Natural killer cell (primary cell): ENCODE measurements at regions of chr15 and their contacts with region 1.

Region 1: GRCh38 chr15:43390723-43391122 is 19.8 kb downstream of the TUBGCP4 start:
- DNase-seq: no peak
- ATAC-seq: no peak
- H3K4me3 ChIP-seq: no peak overlapping the region
- H3K4me3 Mint-ChIP-seq: no peak overlapping the region
- H3K27ac ChIP-seq: no peak overlapping the region
- H3K27ac Mint-ChIP-seq: peak overlapping the region in 1 of 2 donors; percentile 13
- H3K4me1 ChIP-seq: no peaks in the 10 kb centered on the region
- H3K4me1 Mint-ChIP-seq: no peaks in the 10 kb centered on the region
- H3K27me3 ChIP-seq: no peaks in the 10 kb centered on the region
- H3K27me3 Mint-ChIP-seq: no peaks in the 10 kb centered on the region
- CTCF ChIP-seq: no peak

Region 2: DNA sequence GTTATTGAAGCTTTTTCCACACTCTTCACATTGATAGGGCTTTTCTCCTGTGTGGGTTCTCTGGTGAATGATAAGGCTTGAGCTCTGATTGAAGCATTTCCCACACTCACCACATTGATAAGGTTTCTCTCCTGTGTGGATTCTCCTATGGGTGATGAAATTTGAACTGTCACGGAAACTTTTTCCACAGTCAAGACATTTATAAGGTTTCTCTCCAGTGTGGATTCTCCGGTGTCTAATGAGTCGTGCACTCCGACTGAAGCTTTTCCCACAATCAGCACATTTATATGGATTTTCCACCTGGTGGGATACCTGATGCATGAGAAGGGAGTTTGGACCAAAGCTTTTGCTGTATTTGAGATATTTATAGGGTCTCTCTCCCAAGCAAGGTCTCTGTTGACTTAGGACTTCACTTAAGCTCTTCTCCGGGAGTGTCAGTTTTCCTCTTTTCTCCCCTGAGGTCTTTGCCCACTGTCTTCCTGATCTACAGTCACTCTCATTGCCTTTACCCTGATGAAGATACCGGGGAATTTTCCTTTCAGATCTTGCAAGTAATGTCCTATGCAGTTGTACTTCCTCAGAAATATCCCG is 29.3 kb before region 1 on chr15:
- intact Hi-C with region 1: no loop called
- DNase-seq: no peak
- ATAC-seq: no peak
- H3K4me3 ChIP-seq: no peak overlapping the region
- H3K4me3 Mint-ChIP-seq: no peak overlapping the region
- H3K27ac ChIP-seq: no peak overlapping the region
- H3K27ac Mint-ChIP-seq: peak overlapping the region in 1 of 2 donors; percentile 11
- H3K4me1 ChIP-seq: no peaks in the 10 kb centered on the region
- H3K4me1 Mint-ChIP-seq: peaks cover 13 to 21% of the 10 kb centered on the region in 2 donors
- H3K27me3 ChIP-seq: no peaks in the 10 kb centered on the region
- H3K27me3 Mint-ChIP-seq: no peaks in the 10 kb centered on the region
- CTCF ChIP-seq: no peak

Region 3: GRCh38 chr15:43423793-43424192 is 33.1 kb after region 1 on chr15:
- intact Hi-C with region 1: loop called (anchors 5 kb)
- DNase-seq: no peak
- ATAC-seq: no peak
- H3K4me3 ChIP-seq: no peak overlapping the region
- H3K4me3 Mint-ChIP-seq: no peak overlapping the region
- H3K27ac ChIP-seq: no peak overlapping the region
- H3K27ac Mint-ChIP-seq: no peak overlapping the region
- H3K4me1 ChIP-seq: no peaks in the 10 kb centered on the region
- H3K4me1 Mint-ChIP-seq: no peaks in the 10 kb centered on the region
- H3K27me3 ChIP-seq: no peaks in the 10 kb centered on the region
- H3K27me3 Mint-ChIP-seq: no peaks in the 10 kb centered on the region
- CTCF ChIP-seq: no peak